PC-9 (cell line): ENCODE measurements at regions of chr17 and their contacts with region 1.

Region 1: GRCh38 chr17:48181653-48182052 is 74.1 kb downstream of the SNX11 start:
- DNase-seq: peak in 1 of 2 experiments; percentile 22
- H3K4me3 ChIP-seq: no peak overlapping the region
- H3K27ac ChIP-seq: no peak overlapping the region
- H3K4me1 ChIP-seq: no peaks in the 10 kb centered on the region
- H3K27me3 ChIP-seq: no peaks in the 10 kb centered on the region
- CTCF ChIP-seq: peak; percentile 66

Region 2: DNA sequence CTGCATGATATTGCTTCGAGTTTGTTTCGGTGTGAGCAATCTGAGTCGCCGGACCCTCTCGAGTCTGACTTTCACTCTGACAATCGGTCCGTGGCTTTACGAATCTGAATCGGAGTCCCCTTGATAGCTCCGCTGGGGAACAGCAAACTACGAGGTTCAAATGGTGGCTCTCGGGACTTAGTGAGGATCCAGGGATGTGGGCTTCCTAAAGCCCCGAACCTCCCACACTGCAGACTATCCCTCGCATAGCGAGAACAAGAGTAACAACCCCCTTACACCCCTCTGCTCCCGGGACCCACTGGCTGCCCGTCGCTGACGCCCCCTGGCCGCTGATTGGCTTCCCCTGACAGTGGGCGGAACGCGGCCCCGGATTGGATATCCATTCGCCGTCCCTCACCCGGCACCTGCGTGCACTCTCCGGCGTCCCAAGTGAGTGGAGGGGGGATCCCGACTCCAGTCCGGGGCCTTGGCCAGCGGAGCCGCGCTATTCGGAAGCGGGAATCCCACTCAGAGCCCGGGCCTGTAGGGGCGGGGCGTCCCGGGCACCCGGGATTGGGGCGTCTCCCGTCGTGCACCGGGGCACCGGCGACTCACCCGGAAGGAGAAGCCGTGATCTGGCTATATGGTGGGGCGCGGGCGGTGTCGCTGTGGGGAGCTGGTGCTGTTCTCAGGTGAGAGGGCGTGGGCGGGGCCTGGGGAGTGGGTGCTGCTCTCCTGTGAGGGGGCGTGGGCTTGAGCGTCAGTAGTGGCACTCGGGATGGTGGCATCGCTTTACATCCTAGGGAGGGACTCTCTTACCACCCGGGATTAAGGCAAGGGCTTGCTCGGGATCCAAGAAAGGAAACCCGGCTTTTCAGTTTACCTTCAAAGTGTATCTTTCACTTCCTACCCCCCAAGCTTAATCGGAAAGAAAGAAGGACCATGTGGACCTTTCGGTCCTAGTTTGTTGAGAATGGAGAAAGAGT is 74.2 kb before region 1 on chr17 and contains the start of gene SNX11:
- CTCF ChIA-PET with region 1: no interaction called
- POLR2A ChIA-PET with region 1: no interaction called
- intact Hi-C with region 1: no loop called
- DNase-seq: peak; percentile 90 to 94
- H3K4me3 ChIP-seq: peak within 1 kb of the TSS; percentile 94
- H3K27ac ChIP-seq: peak within 1 kb of the TSS; percentile 90
- H3K4me1 ChIP-seq: peaks cover 8% of the 10 kb centered on the region
- H3K27me3 ChIP-seq: no peaks in the 10 kb centered on the region
- CTCF ChIP-seq: peak; percentile 50; the same call in 1 of the 2 replicates
- total RNA-seq, gene SNX11: 16.0 and 17.0 TPM in 2 replicates

Region 3: DNA sequence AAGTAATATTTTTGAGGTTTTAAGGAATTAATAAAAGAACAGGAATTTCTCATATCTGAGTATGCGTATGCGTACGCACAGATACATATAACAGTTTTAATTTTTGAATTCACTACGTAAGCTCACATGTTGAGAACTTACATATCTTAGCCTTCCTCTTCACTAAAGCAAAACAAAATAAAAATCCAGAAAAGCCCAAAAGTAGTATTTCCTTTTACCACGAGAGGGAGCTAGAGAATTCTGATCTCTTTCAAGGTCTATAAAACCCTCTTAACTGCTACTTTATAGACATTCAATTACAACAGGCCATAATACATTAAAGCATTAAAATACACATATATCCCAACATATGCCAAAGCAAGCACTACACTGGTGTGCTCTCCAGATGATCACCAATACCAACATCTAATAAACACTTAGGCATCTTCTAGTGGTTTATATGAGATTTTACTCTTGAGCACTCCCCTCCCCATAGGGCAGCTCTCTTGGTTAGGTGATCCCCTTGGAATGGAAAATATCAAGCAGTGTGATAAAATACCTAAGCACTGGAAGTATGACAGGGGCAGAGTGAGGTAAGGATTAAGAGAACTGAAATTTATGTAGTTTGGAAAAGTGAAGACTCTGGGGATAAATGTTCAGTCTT is 154.3 kb after region 1 on chr17:
- CTCF ChIA-PET with region 1: no interaction called
- POLR2A ChIA-PET with region 1: no interaction called
- intact Hi-C with region 1: loop called (anchors 10 kb)
- DNase-seq: peak in 1 of 2 experiments; percentile 49
- H3K4me3 ChIP-seq: no peak overlapping the region
- H3K27ac ChIP-seq: no peak overlapping the region
- H3K4me1 ChIP-seq: peaks cover 28% of the 10 kb centered on the region
- H3K27me3 ChIP-seq: no peaks in the 10 kb centered on the region
- CTCF ChIP-seq: peak; percentile 93